PC-3 (cell line): ENCODE measurements at regions of chr6 and their contacts with region 1.

Region 1: DNA sequence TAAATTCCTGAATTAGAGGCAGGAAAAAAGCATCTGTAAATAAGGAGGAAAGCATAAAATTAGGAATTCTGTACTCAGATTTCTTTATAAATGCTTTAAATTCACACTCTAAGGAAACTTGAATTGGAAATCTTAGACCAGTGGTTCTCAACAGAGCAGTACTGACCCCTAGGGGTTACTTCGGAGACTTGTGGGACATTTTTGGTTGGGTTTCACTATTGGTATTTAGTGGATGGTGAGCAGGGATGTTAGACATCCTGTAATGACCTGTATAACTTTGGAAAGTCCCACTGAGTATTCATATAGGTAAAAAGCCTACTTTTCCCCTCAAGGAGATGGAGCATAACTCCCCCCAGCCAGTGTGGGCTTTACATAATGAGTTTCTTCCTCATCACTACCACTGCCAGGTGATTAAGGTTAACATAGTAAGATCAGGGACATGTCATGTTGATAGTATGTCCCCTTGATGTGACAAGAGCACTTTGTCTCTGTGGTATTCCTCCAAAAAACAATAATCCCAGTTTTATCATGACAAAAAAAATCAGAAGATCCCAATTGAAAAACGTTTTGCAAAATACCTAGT is 31.0 kb downstream of the GLO1 start:
- DNase-seq: peak; percentile 78
- ATAC-seq: peak; percentile 93
- H3K4me3 ChIP-seq: no peak overlapping the region
- H3K27ac ChIP-seq: no peak overlapping the region
- H3K4me1 ChIP-seq: no peaks in the 10 kb centered on the region
- H3K27me3 ChIP-seq: no peaks in the 10 kb centered on the region
- CTCF ChIP-seq: peak; percentile 89

Region 2: DNA sequence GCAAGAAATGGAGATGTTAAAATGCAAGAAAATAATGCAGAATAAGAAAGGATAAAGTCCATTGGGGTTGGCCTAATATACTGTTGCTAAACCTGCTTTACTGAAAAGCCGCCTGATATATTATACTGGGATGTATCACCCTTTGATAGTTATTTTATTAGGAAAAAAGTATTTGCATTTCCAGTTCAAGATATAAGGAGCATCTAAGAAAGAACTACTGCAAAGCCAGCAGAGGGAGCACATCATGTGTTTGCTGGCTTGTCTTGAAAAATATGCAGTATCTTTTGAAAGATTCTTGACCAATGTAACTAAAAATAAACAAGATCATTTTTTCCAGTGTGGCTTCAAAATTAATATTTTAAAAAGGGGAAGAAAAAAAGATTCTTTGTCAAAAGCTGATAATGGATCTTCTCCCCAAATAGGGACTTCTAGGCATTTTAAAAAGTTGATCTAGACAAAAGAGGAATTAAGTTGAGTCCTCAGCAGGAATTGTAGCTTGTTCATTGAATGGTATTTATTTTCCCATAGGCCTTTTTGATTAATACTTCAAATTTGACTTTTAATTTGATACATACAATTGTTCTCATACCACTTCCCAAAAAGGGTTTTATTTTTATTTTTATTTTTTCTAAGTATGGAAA is 637.6 kb before region 1 on chr6:
- CTCF ChIA-PET with region 1: no interaction called
- POLR2A ChIA-PET with region 1: no interaction called
- intact Hi-C with region 1: loop called (anchors 10 kb)
- DNase-seq: peak; percentile 71
- ATAC-seq: peak; percentile 95
- H3K4me3 ChIP-seq: no peak overlapping the region
- H3K27ac ChIP-seq: no peak overlapping the region
- H3K4me1 ChIP-seq: peaks cover 30% of the 10 kb centered on the region
- H3K27me3 ChIP-seq: no peaks in the 10 kb centered on the region
- CTCF ChIP-seq: peak; percentile 90

Region 3: DNA sequence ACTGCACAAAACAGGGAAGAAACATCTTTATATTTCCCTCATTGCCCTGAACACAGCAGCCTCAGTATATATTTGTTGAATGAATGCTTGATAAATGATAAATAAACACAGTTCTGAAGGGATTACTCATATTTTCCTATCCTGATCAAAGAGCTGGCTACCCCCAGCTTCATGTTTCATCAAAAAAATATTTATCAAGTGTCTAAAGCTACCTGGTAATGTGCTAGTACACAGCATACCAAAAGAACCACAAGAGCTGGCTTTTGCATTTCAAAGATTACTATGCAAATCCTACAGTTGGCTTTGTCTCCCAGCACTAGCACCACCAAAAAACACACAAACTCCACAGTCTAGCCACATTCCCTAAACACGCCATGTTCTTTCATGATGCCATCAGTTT is 162.3 kb before region 1 on chr6:
- CTCF ChIA-PET with region 1: no interaction called
- POLR2A ChIA-PET with region 1: no interaction called
- intact Hi-C with region 1: loop called (anchors 5 kb)
- DNase-seq: peak; percentile 77
- ATAC-seq: peak; percentile 48
- H3K4me3 ChIP-seq: no peak overlapping the region
- H3K27ac ChIP-seq: peak overlapping the region; percentile 42
- H3K4me1 ChIP-seq: peaks cover 31% of the 10 kb centered on the region
- H3K27me3 ChIP-seq: no peaks in the 10 kb centered on the region
- CTCF ChIP-seq: no peak

Region 4: GRCh38 chr6:38570750-38571149 is 101.2 kb before region 1 on chr6:
- CTCF ChIA-PET with region 1: no interaction called
- POLR2A ChIA-PET with region 1: no interaction called
- intact Hi-C with region 1: loop called (anchors 5 kb)
- DNase-seq: peak; percentile 62
- ATAC-seq: peak; percentile 27; the same call in 1 of the 2 replicates
- H3K4me3 ChIP-seq: no peak overlapping the region
- H3K27ac ChIP-seq: no peak overlapping the region
- H3K4me1 ChIP-seq: peaks cover 21% of the 10 kb centered on the region
- H3K27me3 ChIP-seq: no peaks in the 10 kb centered on the region
- CTCF ChIP-seq: peak; percentile 83

Region 5: GRCh38 chr6:38634518-38634917 is 37.5 kb before region 1 on chr6:
- CTCF ChIA-PET with region 1: no interaction called
- POLR2A ChIA-PET with region 1: no interaction called
- intact Hi-C with region 1: no loop called
- DNase-seq: peak; percentile 9
- ATAC-seq: peak; percentile 42
- H3K4me3 ChIP-seq: no peak overlapping the region
- H3K27ac ChIP-seq: no peak overlapping the region
- H3K4me1 ChIP-seq: peaks cover 13% of the 10 kb centered on the region
- H3K27me3 ChIP-seq: no peaks in the 10 kb centered on the region
- CTCF ChIP-seq: no peak

Region 6: GRCh38 chr6:38656896-38657295 is 15.1 kb before region 1 on chr6:
- CTCF ChIA-PET with region 1: no interaction called
- POLR2A ChIA-PET with region 1: no interaction called
- intact Hi-C with region 1: no loop called
- DNase-seq: no peak
- ATAC-seq: no peak
- H3K4me3 ChIP-seq: no peak overlapping the region
- H3K27ac ChIP-seq: no peak overlapping the region
- H3K4me1 ChIP-seq: no peaks in the 10 kb centered on the region
- H3K27me3 ChIP-seq: no peaks in the 10 kb centered on the region
- CTCF ChIP-seq: no peak

Region 7: GRCh38 chr6:39029156-39030011 is 357.4 kb after region 1 on chr6:
- CTCF ChIA-PET with region 1: no interaction called
- POLR2A ChIA-PET with region 1: no interaction called
- intact Hi-C with region 1: no loop called
- DNase-seq: peak; percentile 49
- ATAC-seq: peak; percentile 83
- H3K4me3 ChIP-seq: no peak overlapping the region
- H3K27ac ChIP-seq: no peak overlapping the region
- H3K4me1 ChIP-seq: no peaks in the 10 kb centered on the region
- H3K27me3 ChIP-seq: peaks cover 89% of the 10 kb centered on the region
- CTCF ChIP-seq: peak; percentile 87